Posterior vena cava (tissue), 2 donors: ENCODE measurements at regions of chr17 and their contacts with region 1.

Region 1: DNA sequence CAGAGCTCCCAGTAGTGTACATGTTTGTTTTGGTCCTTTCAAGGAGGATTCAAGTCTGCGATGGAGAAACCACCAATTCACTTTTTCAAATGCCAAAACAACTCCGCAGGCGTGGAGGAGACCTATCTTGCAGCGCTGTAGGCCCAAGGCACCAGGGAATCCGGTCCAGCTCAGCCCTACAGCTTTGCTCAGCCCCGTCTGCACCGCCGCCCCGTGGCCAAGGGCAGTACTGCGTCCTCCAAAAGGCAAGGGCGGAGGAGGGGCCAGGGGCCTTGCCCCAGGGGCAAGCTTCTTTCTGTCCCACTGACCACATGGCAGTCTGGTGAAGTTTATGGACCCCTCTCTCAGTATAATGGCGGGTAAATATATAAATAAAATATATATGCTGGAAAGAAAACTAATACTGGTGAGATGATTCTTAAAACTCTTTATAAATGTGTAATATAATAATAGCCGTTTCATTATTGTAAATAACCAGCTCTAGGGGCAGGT is 709 bp upstream of the CD300LG start:
- DNase-seq: peak; percentile 95

Region 2: GRCh38 chr17:43694077-43694870 is 152.0 kb before region 1 on chr17:
- intact Hi-C with region 1: loop called in 1 of 2 experiments (anchors 10 kb)
- DNase-seq: no peak

Region 3: DNA sequence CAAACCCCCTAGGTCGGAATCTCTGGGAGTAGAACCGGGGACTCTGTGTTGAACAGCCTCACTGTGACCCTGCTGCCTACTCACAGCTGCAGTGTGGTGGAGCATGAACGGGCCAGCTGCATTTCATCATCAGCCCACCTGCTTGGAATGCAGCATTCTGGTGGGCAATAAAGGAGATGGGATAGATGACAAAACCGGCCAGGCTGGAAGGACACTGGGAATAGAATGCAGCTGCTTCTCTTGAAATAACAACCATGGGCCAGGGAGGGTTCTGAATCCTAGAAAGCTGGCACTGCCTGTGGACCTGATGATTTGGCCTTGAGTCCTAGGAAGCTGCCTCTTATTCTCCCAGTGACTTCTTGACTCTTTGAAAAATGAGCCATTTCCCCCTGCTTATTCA is 42.5 kb before region 1 on chr17:
- intact Hi-C with region 1: no loop called
- DNase-seq: no peak